GM13977 (cell line): ENCODE measurements at regions of chr13 and their contacts with region 1.

Region 1: GRCh38 chr13:31909864-31910551 is 121.6 kb upstream of the FRY start:
- DNase-seq: no peak
- CTCF ChIP-seq: peak; percentile 89

Region 2: GRCh38 chr13:31361673-31362072 is 548.3 kb before region 1 on chr13:
- in situ Hi-C with region 1: no loop called
- DNase-seq: no peak
- CTCF ChIP-seq: no peak

Region 3: DNA sequence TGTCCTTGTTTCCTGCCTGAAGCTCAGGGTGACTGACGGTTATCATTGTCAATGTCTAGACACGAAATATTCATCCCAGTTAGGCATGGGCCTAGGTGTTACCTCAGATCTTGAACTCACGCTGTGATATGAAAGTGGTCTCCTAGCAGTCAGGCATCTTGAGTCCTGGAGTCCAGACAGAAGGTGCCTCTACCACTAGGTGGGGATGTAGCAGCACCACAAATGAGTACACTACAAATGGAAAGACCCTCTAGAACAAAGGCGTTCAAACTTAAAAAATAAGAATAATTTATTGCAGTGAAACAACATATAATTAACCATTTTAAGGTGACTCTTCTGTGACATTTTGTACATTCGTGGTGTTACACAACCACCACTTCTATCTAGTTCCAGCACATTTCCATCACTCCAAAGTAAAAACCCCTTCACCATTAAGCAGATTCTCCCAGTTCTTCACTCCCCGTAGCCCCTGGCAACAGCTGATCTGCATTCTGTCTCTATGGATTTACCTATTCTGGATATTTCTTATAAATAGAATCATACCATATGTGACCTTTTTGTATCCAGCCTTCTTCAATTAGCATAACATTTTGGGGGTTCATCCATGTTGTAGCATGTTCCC is 109.7 kb after region 1 on chr13:
- in situ Hi-C with region 1: loop called (anchors 10 kb)
- DNase-seq: peak; percentile 70
- CTCF ChIP-seq: peak; percentile 88

Region 4: DNA sequence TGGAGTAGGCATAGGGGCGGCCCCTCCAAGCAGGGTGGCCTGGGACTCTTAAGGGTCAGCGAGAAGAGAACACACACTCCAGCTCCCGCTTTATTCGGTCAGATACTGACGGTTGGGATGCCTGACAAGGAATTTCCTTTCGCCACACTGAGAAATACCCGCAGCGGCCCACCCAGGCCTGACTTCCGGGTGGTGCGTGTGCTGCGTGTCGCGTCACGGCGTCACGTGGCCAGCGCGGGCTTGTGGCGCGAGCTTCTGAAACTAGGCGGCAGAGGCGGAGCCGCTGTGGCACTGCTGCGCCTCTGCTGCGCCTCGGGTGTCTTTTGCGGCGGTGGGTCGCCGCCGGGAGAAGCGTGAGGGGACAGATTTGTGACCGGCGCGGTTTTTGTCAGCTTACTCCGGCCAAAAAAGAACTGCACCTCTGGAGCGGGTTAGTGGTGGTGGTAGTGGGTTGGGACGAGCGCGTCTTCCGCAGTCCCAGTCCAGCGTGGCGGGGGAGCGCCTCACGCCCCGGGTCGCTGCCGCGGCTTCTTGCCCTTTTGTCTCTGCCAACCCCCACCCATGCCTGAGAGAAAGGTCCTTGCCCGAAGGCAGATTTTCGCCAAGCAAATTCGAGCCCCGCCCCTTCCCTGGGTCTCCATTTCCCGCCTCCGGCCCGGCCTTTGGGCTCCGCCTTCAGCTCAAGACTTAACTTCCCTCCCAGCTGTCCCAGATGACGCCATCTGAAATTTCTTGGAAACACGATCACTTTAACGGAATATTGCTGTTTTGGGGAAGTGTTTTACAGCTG is 405.4 kb after region 1 on chr13 and contains the starts of genes BRCA2 and ZAR1L:
- in situ Hi-C with region 1: loop called (anchors 25 kb)
- DNase-seq: peak; percentile 84
- CTCF ChIP-seq: no peak

Region 5: DNA sequence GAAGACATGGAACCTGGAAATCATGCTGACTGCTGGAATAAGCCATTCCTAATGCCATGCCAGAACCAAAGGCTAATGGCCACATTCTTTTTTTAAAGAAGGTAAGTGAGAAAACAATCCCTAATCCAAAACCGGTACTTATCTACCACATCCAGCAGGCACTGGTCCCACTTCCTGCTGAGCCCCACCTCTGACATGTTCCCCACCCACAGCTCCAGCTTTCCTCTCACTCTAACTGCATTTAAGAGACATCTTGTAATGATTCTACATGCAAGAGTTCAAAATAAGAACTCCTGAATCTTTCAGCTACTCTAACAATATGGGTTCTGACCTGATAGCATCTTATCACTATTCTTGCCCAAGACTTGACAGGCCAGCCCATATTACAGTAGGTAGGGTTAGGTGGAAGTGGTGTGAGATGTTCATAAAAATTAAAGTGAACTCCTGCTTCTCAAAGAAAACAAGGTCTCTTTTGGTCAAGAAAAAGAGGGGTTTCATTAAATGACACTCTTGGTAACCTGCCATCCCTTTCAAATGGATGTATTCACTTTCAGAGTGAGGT is 586.7 kb after region 1 on chr13:
- in situ Hi-C with region 1: no loop called
- DNase-seq: no peak
- CTCF ChIP-seq: no peak

Region 6: GRCh38 chr13:32586080-32586900 is 676.3 kb after region 1 on chr13 and contains the start of gene PDS5B:
- in situ Hi-C with region 1: loop called (anchors 25 kb)
- DNase-seq: peak; percentile 95
- CTCF ChIP-seq: peak; percentile 96